ENCODE measurements at regions of chr4 and their contacts with region 1.

Region 1: GRCh38 chr4:174882317-174882992 is 35.7 kb upstream of the ADAM29 start:
- DNase-seq: no peak
- H3K4me3 ChIP-seq: no peak overlapping the region
- H3K27ac ChIP-seq: peak overlapping the region; percentile 27
- H3K4me1 ChIP-seq: peaks cover 21% of the 10 kb centered on the region
- CTCF ChIP-seq: no peak

Region 2: GRCh38 chr4:174919886-174920423 is 37.5 kb after region 1 on chr4:
- CTCF ChIA-PET with region 1: no interaction called
- POLR2A ChIA-PET with region 1: interaction called, 10 read pairs
- intact Hi-C with region 1: no loop called
- DNase-seq: no peak
- H3K4me3 ChIP-seq: no peak overlapping the region
- H3K27ac ChIP-seq: peak overlapping the region; percentile 26
- H3K4me1 ChIP-seq: peaks cover 45% of the 10 kb centered on the region
- CTCF ChIP-seq: no peak